Testis (tissue), 5 donors: ENCODE measurements at regions of chr3 and their contacts with region 1.

Region 1: DNA sequence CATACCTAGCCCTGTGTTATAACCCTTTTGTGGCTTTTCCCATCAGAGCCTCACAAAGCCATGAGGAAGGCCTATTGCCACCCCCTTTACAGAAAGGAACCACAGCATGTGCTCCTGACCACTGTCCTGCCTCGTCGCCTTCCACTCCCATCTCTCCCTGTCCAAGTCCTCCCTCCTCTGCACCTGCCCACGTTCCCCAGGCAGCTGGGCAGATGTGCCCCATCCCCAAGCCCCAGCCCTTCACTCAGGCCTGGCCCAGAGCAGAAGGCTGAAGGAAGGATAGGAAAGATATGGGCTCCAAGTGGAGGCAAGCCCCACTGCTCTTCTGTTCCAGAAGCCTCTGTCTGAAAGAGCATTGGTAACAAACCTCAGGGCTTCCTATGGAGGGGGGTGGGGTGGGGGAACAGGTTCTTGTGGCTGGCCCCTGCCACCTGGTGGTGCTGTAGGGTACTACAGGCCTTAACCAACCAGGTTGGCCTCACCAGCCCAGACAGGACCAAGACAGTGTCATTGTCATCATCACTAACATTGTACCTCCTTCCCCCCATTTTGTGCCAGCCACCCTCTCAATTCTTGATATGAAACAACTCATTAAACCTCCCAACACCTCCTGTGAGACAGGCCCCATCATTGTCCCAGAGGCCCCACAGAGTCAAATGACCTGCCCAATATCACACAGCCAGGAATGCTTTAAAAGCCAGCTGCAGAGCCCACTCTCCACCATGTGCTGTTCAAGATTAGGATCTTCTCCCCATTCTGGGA is 10.0 kb downstream of the POC1A start:
- DNase-seq: peak; percentile 95
- H3K4me3 ChIP-seq: no peak overlapping the region
- H3K27ac ChIP-seq: no peak overlapping the region
- H3K4me1 ChIP-seq: peaks cover 3% of the 10 kb centered on the region
- H3K27me3 ChIP-seq: no peaks in the 10 kb centered on the region
- CTCF ChIP-seq: peak; percentile 98 to 99 (median 98)
- POLR2A ChIP-seq: no peak

Region 2: GRCh38 chr3:52001443-52001974 is 142.7 kb before region 1 on chr3:
- intact Hi-C with region 1: loop called (anchors 5 kb)
- DNase-seq: peak; percentile 81
- H3K4me3 ChIP-seq: no peak overlapping the region
- H3K27ac ChIP-seq: no peak overlapping the region
- H3K4me1 ChIP-seq: peaks cover 25% of the 10 kb centered on the region
- H3K27me3 ChIP-seq: no peaks in the 10 kb centered on the region
- CTCF ChIP-seq: peak; percentile 82 to 96 (median 88)
- POLR2A ChIP-seq: no peak